ENCODE measurements at regions of chr6 and their contacts with region 1.

Region 1: DNA sequence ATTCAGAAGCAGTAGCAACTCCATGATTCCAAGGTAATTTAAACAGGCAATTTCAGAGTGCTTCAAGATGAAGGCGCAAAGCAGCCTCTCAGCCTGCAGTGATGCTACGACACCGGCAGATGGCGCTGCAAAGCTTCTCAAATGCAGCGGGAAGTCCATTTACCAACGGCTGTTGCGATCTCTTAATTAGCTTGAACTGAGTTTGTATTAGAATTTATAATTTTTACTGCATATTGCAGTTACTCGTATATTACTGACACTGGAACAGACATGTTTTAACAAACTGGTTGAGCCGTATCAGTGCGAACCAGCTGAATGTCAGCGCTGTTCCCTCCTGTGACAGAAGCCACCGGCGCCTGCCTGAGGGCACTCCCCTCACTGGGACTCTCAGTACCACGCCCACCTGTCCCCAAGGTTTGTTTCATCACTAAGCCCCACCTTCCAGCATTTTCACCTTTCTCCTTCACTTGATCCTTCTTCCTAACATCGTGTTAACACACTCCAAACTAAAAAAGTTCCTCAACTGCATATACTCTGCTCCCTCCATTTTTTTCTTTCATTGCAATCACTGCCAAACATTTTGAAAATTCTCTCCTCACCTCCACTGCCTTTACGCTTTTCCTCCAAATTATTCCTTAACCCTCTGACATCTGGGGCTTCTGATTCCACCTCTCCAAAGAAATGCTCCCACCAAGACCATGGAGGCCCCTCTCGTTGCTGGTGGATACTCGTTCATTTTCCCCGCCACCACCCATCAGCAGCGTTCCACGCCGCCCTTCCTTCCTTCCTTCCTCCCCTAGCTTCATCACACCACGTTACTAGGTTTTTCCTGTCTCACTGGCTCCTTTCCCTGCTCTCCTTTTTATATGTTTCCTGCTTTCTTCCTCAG is 14.5 kb downstream of the GNL1 start:
- DNase-seq: peak in 1 of 2 donors; percentile 87
- H3K4me3 ChIP-seq: peak overlapping the region; percentile 9 to 52
- H3K27ac ChIP-seq: no peak overlapping the region
- H3K4me1 ChIP-seq: no peaks in the 10 kb centered on the region
- H3K27me3 ChIP-seq: no peaks in the 10 kb centered on the region
- CTCF ChIP-seq: peak; percentile 69 to 97 (median 92)

Region 2: DNA sequence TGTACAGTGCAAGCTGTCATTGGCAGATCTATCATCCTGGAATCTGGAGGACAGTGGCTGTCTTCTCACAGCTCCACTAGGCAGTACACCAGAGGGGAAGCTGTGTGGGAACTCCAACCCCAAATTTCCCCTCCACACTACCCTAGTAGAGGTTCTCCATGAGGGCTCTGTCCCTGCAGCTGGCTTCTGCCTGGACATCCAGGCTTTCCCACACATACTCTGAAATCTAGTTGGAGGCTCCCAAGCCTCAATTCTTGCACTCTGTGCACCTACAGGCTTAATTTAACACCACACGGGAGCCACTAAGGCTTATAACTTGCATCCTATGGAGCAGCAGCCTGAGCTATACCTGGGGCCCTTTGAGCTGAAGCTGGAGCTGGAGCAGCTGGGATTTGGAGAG is 258.0 kb before region 1 on chr6:
- intact Hi-C with region 1: no loop called
- DNase-seq: no peak
- H3K4me3 ChIP-seq: no peak overlapping the region
- H3K27ac ChIP-seq: no peak overlapping the region
- H3K4me1 ChIP-seq: no peaks in the 10 kb centered on the region
- H3K27me3 ChIP-seq: no peaks in the 10 kb centered on the region
- CTCF ChIP-seq: no peak

Region 3: DNA sequence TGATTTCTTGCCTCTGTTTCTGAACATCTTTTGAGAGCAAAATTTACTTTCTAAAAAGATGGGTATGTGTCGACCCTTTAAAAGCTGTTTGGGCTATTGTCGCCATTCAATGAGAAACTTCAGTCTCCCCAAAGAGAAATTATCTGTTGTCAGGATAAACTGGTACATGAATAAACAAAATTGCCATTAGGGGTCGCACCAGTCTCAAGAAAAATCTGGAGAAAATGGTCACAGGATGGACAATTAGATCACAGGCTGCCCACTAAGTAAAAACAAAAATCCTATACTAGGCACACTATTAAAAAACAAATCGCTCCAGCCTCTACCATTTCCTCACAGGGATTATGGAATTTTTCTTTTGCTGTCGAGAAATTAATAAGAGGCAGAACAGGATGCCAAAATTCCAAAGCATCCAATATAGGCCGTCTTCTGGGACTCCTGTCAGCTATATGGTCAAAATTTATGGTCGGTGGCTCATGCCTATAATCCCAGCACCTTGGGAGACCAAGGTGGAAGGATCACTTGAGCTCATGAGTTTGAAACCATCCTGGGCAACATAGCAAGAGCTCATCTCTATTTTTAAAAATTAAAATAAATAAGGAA is 58.0 kb before region 1 on chr6:
- intact Hi-C with region 1: loop called (anchors 2 kb)
- DNase-seq: no peak
- H3K4me3 ChIP-seq: no peak overlapping the region
- H3K27ac ChIP-seq: no peak overlapping the region
- H3K4me1 ChIP-seq: peaks cover 0 to 6% of the 10 kb centered on the region in 2 donors
- H3K27me3 ChIP-seq: no peaks in the 10 kb centered on the region
- CTCF ChIP-seq: peak; percentile 33 to 56 (median 49)

Region 4: DNA sequence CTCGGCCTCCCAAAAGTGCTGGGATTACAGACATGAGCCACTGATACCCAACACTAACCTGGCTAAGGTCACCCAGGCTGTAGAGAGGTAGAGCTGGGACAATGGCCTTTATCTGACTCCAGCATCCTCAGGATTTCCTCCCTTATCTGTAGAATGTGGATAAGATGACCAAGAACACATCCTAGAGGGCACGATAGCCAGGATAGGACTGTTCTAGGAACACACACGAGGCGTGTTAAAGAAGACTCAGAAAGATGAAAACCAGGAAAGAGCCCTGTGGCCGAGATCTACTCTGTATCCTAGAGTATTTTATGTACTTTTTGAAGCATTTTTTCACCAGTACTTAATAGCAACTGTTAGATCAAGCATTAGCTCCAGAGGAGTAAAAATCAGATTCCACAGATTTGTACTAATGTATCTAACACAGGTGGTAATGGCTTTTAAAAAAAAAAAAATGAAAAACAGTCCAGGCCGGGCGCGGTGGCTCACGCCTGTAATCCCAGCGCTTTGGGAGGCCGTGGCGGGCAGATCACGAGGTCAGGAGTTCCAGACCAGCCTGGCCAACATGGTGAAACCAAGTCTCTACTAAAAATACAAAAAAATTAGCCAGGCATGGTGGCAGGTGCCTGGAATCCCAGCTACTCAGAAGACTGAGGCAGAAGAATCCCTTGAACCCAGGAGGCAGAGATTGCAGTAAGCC is 58.0 kb after region 1 on chr6:
- intact Hi-C with region 1: loop called (anchors 5 kb)
- DNase-seq: no peak
- H3K4me3 ChIP-seq: no peak overlapping the region
- H3K27ac ChIP-seq: no peak overlapping the region
- H3K4me1 ChIP-seq: no peaks in the 10 kb centered on the region
- H3K27me3 ChIP-seq: no peaks in the 10 kb centered on the region
- CTCF ChIP-seq: no peak

Region 5: DNA sequence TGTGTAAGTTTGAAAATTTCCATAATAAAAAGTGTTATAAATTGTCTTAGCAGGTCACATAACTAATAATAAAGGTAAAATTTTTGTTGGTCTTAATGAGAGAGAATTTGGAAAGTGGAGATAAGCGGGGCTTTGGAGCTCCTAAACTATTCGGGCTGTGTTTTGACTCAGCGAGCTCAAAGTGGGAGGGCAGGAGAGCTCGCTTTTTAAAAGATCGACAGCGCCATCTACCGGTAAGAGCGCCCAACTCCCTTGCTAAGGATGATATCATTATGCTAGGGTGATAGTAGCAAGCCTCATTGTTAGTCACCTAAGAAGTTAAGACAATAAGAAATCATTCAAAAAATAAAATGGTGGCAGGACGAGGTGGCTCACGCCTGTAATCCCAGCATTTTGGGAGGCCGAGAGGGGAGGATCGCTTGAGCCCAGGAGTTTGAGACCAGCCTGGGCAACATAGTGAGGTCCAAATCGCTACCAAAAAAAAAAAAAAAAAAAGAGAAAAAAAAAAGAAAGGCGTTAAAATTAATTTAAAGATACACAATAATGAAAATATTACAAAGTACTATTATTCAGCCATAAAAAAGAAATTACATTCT is 545.8 kb after region 1 on chr6:
- intact Hi-C with region 1: loop called (anchors 5 kb)
- DNase-seq: peak; percentile 16 to 90
- H3K4me3 ChIP-seq: no peak overlapping the region
- H3K27ac ChIP-seq: no peak overlapping the region
- H3K4me1 ChIP-seq: peaks cover 0 to 5% of the 10 kb centered on the region in 2 donors
- H3K27me3 ChIP-seq: no peaks in the 10 kb centered on the region
- CTCF ChIP-seq: peak; percentile 71 to 79 (median 72)

Measured in ascending aorta (tissue), 2 donors.